Naive thymus-derived CD8-positive, alpha-beta T cell (primary cell): ENCODE measurements at regions of chr10 and their contacts with region 1.

Region 1: GRCh38 chr10:28381903-28382347 is 79.1 kb upstream of the MPP7 start:
- DNase-seq: peak; percentile 68 to 90 (median 80)
- ATAC-seq: peak; percentile 83 to 95
- H3K4me3 Mint-ChIP-seq: peak overlapping the region in 4 of 10 donors; percentile 5 to 63 (median 16)
- H3K27ac Mint-ChIP-seq: peak overlapping the region in 8 of 10 donors; percentile 9 to 93 (median 68)
- H3K4me1 Mint-ChIP-seq: peaks cover 16 to 39% (median 32%) of the 10 kb centered on the region in 4 donors
- H3K27me3 Mint-ChIP-seq: peaks cover 0 to 6% (median 0%) of the 10 kb centered on the region in 5 donors

Region 2: GRCh38 chr10:28250782-28251181 is 131.1 kb before region 1 on chr10:
- POLR2A ChIA-PET with region 1: interaction called, 10 read pairs
- DNase-seq: peak in 3 of 10 donors; percentile 33 to 42 (median 35)
- ATAC-seq: peak; percentile 42 to 55
- H3K4me3 Mint-ChIP-seq: no peak overlapping the region
- H3K27ac Mint-ChIP-seq: peak overlapping the region in 1 of 10 donors; percentile 10
- H3K4me1 Mint-ChIP-seq: peaks cover 18 to 64% (median 43%) of the 10 kb centered on the region in 4 donors
- H3K27me3 Mint-ChIP-seq: no peaks in the 10 kb centered on the region

Region 3: GRCh38 chr10:28302638-28303488 is 79.1 kb before region 1 on chr10 and contains the start of gene MPP7:
- POLR2A ChIA-PET with region 1: interaction called, 90 read pairs
- DNase-seq: peak; percentile 95 to 98 (median 97)
- ATAC-seq: peak; percentile 92 to 93
- H3K4me3 Mint-ChIP-seq: peak within 1 kb of the TSS; percentile 93 to 98 (median 96)
- H3K27ac Mint-ChIP-seq: peak within 1 kb of the TSS; percentile 78 to 99 (median 96)
- H3K4me1 Mint-ChIP-seq: peaks cover 30 to 76% (median 66%) of the 10 kb centered on the region in 4 donors
- H3K27me3 Mint-ChIP-seq: peaks cover 0 to 3% (median 0%) of the 10 kb centered on the region in 5 donors
- polyA plus RNA-seq, gene MPP7: 33.3 to 41.2 (median 40.3) TPM

Region 4: DNA sequence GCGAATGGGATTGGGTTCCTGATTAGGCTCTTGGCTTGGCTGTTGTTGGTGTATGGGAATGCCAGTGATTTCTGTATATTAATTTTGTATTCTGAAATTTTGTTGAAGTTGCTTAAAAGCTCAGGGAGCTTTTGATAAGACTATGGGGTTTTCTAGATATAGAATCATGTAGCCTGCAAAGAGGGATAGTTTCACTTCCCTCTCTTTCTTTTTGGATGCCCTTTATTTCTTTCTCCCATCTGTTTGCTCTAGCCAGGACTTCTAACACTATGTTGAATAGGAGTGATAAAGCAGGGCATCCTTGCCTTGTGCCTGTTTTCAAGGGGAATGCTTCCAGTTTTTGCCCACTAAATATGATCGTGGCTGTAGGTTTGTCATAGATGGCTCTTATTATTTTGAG is 38.7 kb before region 1 on chr10:
- POLR2A ChIA-PET with region 1: no interaction called
- DNase-seq: no peak
- ATAC-seq: no peak
- H3K4me3 Mint-ChIP-seq: no peak overlapping the region
- H3K27ac Mint-ChIP-seq: peak overlapping the region in 1 of 10 donors; percentile 33
- H3K4me1 Mint-ChIP-seq: peaks cover 9 to 14% (median 13%) of the 10 kb centered on the region in 4 donors
- H3K27me3 Mint-ChIP-seq: no peaks in the 10 kb centered on the region

Region 5: DNA sequence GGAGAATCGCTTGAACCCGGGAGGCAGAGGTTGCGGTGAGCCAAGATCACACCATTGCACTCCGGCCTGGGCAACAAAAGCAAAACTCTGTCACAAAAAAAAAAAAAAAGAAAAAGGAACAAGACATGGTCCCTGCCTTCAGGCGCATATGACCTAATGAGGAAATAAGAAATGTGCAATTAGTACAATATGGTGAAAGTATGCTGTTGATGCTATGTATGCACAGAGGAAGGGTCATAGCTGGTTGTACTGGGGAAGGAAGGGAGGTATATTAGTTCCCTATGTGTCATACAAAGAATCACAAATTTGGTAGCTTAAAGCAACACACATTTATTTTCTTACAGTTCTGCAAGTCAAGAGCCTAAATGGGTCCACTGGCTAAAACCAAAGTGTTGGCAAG is 18.8 kb after region 1 on chr10:
- POLR2A ChIA-PET with region 1: no interaction called
- DNase-seq: no peak
- ATAC-seq: no peak
- H3K4me3 Mint-ChIP-seq: no peak overlapping the region
- H3K27ac Mint-ChIP-seq: no peak overlapping the region
- H3K4me1 Mint-ChIP-seq: peaks cover 0 to 9% (median 0%) of the 10 kb centered on the region in 4 donors
- H3K27me3 Mint-ChIP-seq: peaks cover 0 to 12% (median 4%) of the 10 kb centered on the region in 5 donors